ENCODE measurements at regions of chr2 and their contacts with region 1.

Region 1: GRCh38 chr2:62050456-62051045 is 145.1 kb downstream of the COMMD1 start:
- DNase-seq: no peak
- H3K4me3 ChIP-seq: no peak overlapping the region
- H3K27ac ChIP-seq: no peak overlapping the region
- H3K4me1 ChIP-seq: no peaks in the 10 kb centered on the region
- H3K27me3 ChIP-seq: no peaks in the 10 kb centered on the region
- CTCF ChIP-seq: no peak
- POLR2A ChIP-seq: no peak

Region 2: GRCh38 chr2:62038975-62039771 is 11.4 kb before region 1 on chr2:
- CTCF ChIA-PET with region 1: interaction called, 12 read pairs
- POLR2A ChIA-PET with region 1: no interaction called
- dilution Hi-C with region 1: no loop called
- intact Hi-C with region 1: no loop called
- DNase-seq: no peak
- H3K4me3 ChIP-seq: no peak overlapping the region
- H3K27ac ChIP-seq: no peak overlapping the region
- H3K4me1 ChIP-seq: no peaks in the 10 kb centered on the region
- H3K27me3 ChIP-seq: no peaks in the 10 kb centered on the region
- CTCF ChIP-seq: no peak
- POLR2A ChIP-seq: no peak

Region 3: DNA sequence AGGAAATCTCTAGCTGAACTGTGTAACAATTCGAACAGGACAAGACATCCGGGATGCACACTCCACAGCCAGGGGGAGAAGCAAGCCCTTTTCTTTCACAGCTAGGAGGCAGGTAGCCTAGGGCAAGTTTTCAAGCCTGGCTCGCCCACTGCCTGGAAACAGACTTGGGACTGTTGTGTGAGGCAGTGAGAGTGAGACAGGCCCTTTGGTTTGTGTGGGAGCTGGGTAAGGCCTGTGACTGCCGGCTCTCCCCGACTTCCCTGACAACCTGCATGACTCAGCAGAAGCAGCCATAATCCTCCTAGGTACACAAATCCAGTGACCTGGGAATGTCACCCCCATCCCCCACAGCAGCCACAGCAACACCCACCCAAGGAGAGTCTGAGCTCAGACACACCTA is 1358.0 kb after region 1 on chr2:
- CTCF ChIA-PET with region 1: no interaction called
- POLR2A ChIA-PET with region 1: no interaction called
- dilution Hi-C with region 1: no loop called
- intact Hi-C with region 1: no loop called
- DNase-seq: no peak
- H3K4me3 ChIP-seq: no peak overlapping the region
- H3K27ac ChIP-seq: no peak overlapping the region
- H3K4me1 ChIP-seq: no peaks in the 10 kb centered on the region
- H3K27me3 ChIP-seq: no peaks in the 10 kb centered on the region
- CTCF ChIP-seq: no peak
- POLR2A ChIP-seq: no peak

Measured in endothelial cell of umbilical vein (primary cell).